GM12878 (cell line): ENCODE measurements at regions of chr5 and their contacts with region 1.

Region 1: GRCh38 chr5:42908509-42909488 is 97.1 kb upstream of the SELENOP start:
- DNase-seq: peak; percentile 51
- ATAC-seq: peak; percentile 97
- H3K4me3 ChIP-seq: peak overlapping the region; percentile 62; the same call in 1 of the 2 replicates
- H3K27ac ChIP-seq: no peak overlapping the region
- H3K4me1 ChIP-seq: peaks cover 4% of the 10 kb centered on the region; the same call in 1 of the 2 replicates
- H3K27me3 ChIP-seq: no peaks in the 10 kb centered on the region; a peak in 1 of 4 replicates
- CTCF ChIP-seq: peak; percentile 80 to 91 (median 87)
- EP300 ChIP-seq: no peak
- POLR2A ChIP-seq: no peak
- RAD21 ChIP-seq: peak; percentile 70

Region 2: DNA sequence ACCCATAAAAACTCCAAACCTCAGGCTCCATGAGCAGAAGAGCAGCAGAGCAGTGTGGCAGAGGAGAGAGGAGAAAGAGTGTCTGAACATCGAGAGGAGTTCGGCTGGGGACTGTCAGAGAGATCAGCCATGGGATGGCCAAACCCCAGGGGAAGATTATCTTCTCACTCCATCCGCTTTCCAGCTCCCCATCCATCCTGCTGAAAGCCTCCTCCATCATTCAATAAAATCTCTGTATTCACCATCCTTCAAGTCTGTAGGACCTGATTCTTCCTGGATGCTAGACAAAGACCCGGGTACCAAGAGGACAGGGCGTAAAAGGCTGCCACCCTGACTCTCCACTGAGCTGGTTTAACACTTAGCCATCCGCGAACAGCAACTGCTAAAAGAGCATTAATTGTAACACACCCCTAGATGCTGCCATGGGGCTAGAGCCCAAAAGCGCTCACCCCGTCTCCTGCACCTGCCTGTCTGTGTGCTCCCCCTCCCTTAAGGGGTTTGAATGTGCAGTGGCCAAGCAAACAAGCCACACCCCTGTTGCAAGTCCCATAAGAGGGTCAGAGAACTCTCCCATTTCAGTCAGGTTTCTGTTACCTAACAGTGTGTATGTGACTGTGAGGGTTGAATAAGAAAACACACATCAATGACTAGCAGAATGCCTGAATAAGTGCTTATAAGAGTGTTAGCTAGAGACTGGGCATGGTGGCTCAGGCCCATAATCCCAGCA is 83.2 kb before region 1 on chr5:
- CTCF ChIA-PET with region 1: no interaction called
- POLR2A ChIA-PET with region 1: no interaction called
- RAD21 ChIA-PET with region 1: no interaction called
- SMC1A ChIA-PET with region 1: no interaction called
- in situ Hi-C with region 1: no loop called
- intact Hi-C with region 1: no loop called
- DNase-seq: no peak
- ATAC-seq: no peak
- H3K4me3 ChIP-seq: no peak overlapping the region
- H3K27ac ChIP-seq: no peak overlapping the region
- H3K4me1 ChIP-seq: no peaks in the 10 kb centered on the region
- H3K27me3 ChIP-seq: no peaks in the 10 kb centered on the region; a peak in 1 of 4 replicates
- CTCF ChIP-seq: no peak
- EP300 ChIP-seq: no peak
- POLR2A ChIP-seq: no peak
- RAD21 ChIP-seq: no peak

Region 3: GRCh38 chr5:42889311-42889933 is 19.4 kb before region 1 on chr5:
- CTCF ChIA-PET with region 1: interaction called, 15 read pairs
- POLR2A ChIA-PET with region 1: no interaction called
- RAD21 ChIA-PET with region 1: interaction called, 4 read pairs
- SMC1A ChIA-PET with region 1: interaction called, 9 read pairs
- in situ Hi-C with region 1: no loop called
- intact Hi-C with region 1: no loop called
- DNase-seq: no peak
- ATAC-seq: peak; percentile 97; the same call in 2 of the 3 replicates
- H3K4me3 ChIP-seq: no peak overlapping the region
- H3K27ac ChIP-seq: no peak overlapping the region
- H3K4me1 ChIP-seq: no peaks in the 10 kb centered on the region
- H3K27me3 ChIP-seq: peaks cover 0 to 2% of the 10 kb centered on the region in 2 experiments; a peak in 2 of 4 replicates
- CTCF ChIP-seq: peak; percentile 85 to 92 (median 90)
- EP300 ChIP-seq: no peak
- POLR2A ChIP-seq: no peak
- RAD21 ChIP-seq: peak; percentile 96

Region 4: GRCh38 chr5:42970636-42971559 is 62.1 kb after region 1 on chr5:
- CTCF ChIA-PET with region 1: interaction called, 17 read pairs
- POLR2A ChIA-PET with region 1: no interaction called
- RAD21 ChIA-PET with region 1: interaction called, 5 read pairs
- SMC1A ChIA-PET with region 1: interaction called, 5 read pairs
- in situ Hi-C with region 1: no loop called
- intact Hi-C with region 1: no loop called
- DNase-seq: no peak
- ATAC-seq: no peak
- H3K4me3 ChIP-seq: no peak overlapping the region
- H3K27ac ChIP-seq: no peak overlapping the region
- H3K4me1 ChIP-seq: no peaks in the 10 kb centered on the region
- H3K27me3 ChIP-seq: no peaks in the 10 kb centered on the region
- CTCF ChIP-seq: 0 out of 6 replicates have a peak, but pooled peaks of 1 of the 3 experiments have one; percentile 7
- EP300 ChIP-seq: no peak
- POLR2A ChIP-seq: no peak
- RAD21 ChIP-seq: peak; percentile 17; the same call in 1 of the 2 replicates

Region 5: GRCh38 chr5:42994246-42995151 is 85.7 kb after region 1 on chr5:
- CTCF ChIA-PET with region 1: interaction called, 16 read pairs
- POLR2A ChIA-PET with region 1: no interaction called
- RAD21 ChIA-PET with region 1: interaction called, 36 read pairs
- SMC1A ChIA-PET with region 1: interaction called, 12 read pairs
- in situ Hi-C with region 1: no loop called
- intact Hi-C with region 1: loop called (anchors 2 kb)
- DNase-seq: no peak
- ATAC-seq: peak; percentile 72
- H3K4me3 ChIP-seq: peak overlapping the region; percentile 82
- H3K27ac ChIP-seq: peak overlapping the region; percentile 94
- H3K4me1 ChIP-seq: peaks cover 12% of the 10 kb centered on the region
- H3K27me3 ChIP-seq: no peaks in the 10 kb centered on the region
- CTCF ChIP-seq: peak; percentile 89 to 94 (median 90)
- EP300 ChIP-seq: 0 out of 4 replicates have a peak, but pooled peaks of 1 of the 2 experiments have one; percentile 13
- POLR2A ChIP-seq: 0 out of 2 replicates have a peak, but pooled peaks have one; percentile 29
- RAD21 ChIP-seq: peak; percentile 75

Region 6: GRCh38 chr5:43040287-43041098 is 131.7 kb after region 1 on chr5 and contains the start of gene ANXA2R:
- CTCF ChIA-PET with region 1: interaction called, 50 read pairs
- POLR2A ChIA-PET with region 1: interaction called, 3 read pairs
- RAD21 ChIA-PET with region 1: interaction called, 32 read pairs
- SMC1A ChIA-PET with region 1: interaction called, 32 read pairs
- in situ Hi-C with region 1: loop called (anchors 5 kb)
- intact Hi-C with region 1: loop called (anchors 1 kb)
- DNase-seq: no peak
- ATAC-seq: peak; percentile 60
- H3K4me3 ChIP-seq: peak within 1 kb of the TSS; percentile 66
- H3K27ac ChIP-seq: peak within 1 kb of the TSS; percentile 82
- H3K4me1 ChIP-seq: peaks cover 20% of the 10 kb centered on the region
- H3K27me3 ChIP-seq: no peaks in the 10 kb centered on the region
- CTCF ChIP-seq: peak; percentile 83 to 95 (median 92)
- EP300 ChIP-seq: no peak
- POLR2A ChIP-seq: peak; percentile 27; the same call in 1 of the 2 replicates
- RAD21 ChIP-seq: peak; percentile 92
- polyA plus RNA-seq, gene ANXA2R: 3.2 to 4.5 TPM

Region 7: GRCh38 chr5:43105369-43106289 is 196.8 kb after region 1 on chr5:
- CTCF ChIA-PET with region 1: interaction called, 25 read pairs
- POLR2A ChIA-PET with region 1: no interaction called
- RAD21 ChIA-PET with region 1: interaction called, 7 read pairs
- SMC1A ChIA-PET with region 1: interaction called, 5 read pairs
- in situ Hi-C with region 1: no loop called
- intact Hi-C with region 1: loop called (anchors 1 kb)
- DNase-seq: peak; percentile 79
- ATAC-seq: peak; percentile 99
- H3K4me3 ChIP-seq: peak overlapping the region; percentile 73
- H3K27ac ChIP-seq: peak overlapping the region; percentile 55
- H3K4me1 ChIP-seq: peaks cover 5% of the 10 kb centered on the region
- H3K27me3 ChIP-seq: no peaks in the 10 kb centered on the region
- CTCF ChIP-seq: peak; percentile 100
- EP300 ChIP-seq: no peak
- POLR2A ChIP-seq: peak; percentile 26; the same call in 1 of the 2 replicates
- RAD21 ChIP-seq: peak; percentile 93

Region 8: DNA sequence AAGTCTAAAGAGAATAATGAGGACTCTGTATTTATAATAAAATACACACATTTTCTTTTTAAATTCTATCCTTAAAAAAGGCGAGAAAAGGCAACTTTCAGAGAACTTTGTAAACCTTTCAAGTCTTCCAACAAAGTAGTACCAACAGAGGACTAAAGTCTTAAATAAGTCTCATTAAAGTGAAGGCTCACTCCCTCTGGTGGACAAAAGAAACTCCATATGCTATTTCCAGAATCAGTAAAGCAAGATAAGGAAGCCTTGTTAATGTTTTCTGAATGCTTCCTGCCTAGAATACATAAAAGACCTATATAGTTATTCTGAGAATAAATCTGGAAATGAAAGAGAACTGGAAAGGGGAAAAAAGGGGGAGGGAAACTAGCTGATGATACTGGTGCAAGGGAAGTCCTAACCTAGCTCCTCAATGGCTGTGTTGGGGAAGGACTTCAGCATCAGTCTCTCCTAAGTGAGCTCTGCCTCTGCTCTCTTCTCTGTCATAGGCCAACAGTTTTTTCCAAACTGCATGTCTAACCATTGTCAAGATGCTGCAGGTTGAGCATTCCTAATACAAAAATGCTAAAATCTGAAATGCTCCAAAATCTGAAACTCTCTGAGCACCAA is 397.3 kb after region 1 on chr5:
- CTCF ChIA-PET with region 1: no interaction called
- POLR2A ChIA-PET with region 1: no interaction called
- RAD21 ChIA-PET with region 1: interaction called, 10 read pairs
- SMC1A ChIA-PET with region 1: no interaction called
- in situ Hi-C with region 1: no loop called
- intact Hi-C with region 1: loop called (anchors 10 kb)
- DNase-seq: peak; percentile 30
- ATAC-seq: peak; percentile 72
- H3K4me3 ChIP-seq: peak overlapping the region; percentile 27; the same call in 1 of the 2 replicates
- H3K27ac ChIP-seq: no peak overlapping the region
- H3K4me1 ChIP-seq: peaks cover 4% of the 10 kb centered on the region; the same call in 1 of the 2 replicates
- H3K27me3 ChIP-seq: no peaks in the 10 kb centered on the region
- CTCF ChIP-seq: peak; percentile 56 to 69 (median 67)
- EP300 ChIP-seq: no peak
- POLR2A ChIP-seq: no peak
- RAD21 ChIP-seq: peak; percentile 77